ENCODE measurements at regions of chr12 and their contacts with region 1.

Region 1: GRCh38 chr12:52903285-52903854 is 1.5 kb downstream of the KRT8 start:
- DNase-seq: no peak
- H3K4me3 ChIP-seq: peak overlapping the region; percentile 97
- H3K27ac ChIP-seq: peak overlapping the region; percentile 93
- H3K4me1 ChIP-seq: peaks cover 69% of the 10 kb centered on the region
- H3K27me3 ChIP-seq: no peaks in the 10 kb centered on the region
- CTCF ChIP-seq: no peak

Region 2: DNA sequence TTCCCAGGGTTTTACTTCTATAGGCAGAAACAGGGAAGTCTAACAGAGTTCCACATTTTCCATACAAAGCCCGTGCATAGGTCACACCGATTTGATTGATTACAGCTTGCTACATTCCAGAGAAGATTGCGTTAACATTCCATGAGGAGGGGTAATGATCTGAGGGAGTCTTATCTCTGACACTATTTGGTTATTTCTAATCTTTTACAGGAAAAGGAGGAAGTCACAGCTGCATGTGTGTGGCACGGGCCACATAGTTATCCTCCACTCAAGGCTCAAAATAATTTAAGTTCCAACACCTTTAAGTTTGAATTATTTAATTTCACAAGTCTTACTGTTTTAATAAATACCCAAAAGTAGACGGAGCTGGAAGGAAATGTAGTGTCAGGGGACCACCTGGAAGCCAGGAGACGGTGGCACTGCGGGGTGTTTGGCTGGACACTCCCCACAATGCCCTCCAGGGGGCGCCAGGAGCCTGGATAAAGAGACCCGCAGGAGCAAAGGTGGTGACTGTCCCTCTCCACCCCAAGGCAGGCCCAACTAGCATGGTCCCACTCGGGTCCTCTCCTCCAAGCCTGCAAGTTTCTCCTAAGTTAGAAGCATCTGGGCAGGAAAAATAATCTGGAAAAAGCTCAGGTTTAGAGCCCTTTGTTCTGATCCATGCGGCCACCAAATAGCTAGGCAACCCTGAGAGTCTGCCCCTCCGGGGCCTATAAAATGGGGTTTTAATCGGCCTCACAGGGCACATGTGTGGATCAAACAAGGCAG is 18.7 kb before region 1 on chr12:
- CTCF ChIA-PET with region 1: interaction called, 5 read pairs
- POLR2A ChIA-PET with region 1: interaction called, 9 read pairs
- intact Hi-C with region 1: loop called (anchors 1 kb)
- DNase-seq: peak in 1 of 2 experiments; percentile 76
- H3K4me3 ChIP-seq: no peak overlapping the region
- H3K27ac ChIP-seq: no peak overlapping the region
- H3K4me1 ChIP-seq: peaks cover 6% of the 10 kb centered on the region
- H3K27me3 ChIP-seq: no peaks in the 10 kb centered on the region
- CTCF ChIP-seq: peak; percentile 97

Region 3: DNA sequence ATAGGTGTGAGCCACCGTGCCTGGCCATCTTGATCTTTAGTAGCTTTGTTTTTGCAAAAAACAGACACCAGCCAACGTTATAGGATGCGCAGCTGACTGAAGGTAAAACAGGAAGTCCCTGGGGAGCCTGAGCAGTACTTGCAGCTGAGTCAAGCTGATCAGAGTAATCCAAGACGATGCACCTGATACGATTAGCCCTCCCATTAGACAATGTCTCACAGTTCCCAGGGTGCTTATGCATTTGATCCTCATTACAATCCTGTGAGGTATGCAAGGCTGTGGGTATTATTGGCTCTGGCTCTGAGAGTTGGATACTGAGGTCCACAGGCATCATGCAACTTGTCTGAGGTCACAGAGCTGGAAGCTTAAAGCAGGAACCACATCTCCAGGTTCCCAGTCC is 53.6 kb after region 1 on chr12:
- CTCF ChIA-PET with region 1: interaction called, 9 read pairs
- POLR2A ChIA-PET with region 1: interaction called, 24 read pairs
- intact Hi-C with region 1: no loop called
- DNase-seq: peak in 1 of 2 experiments; percentile 94
- H3K4me3 ChIP-seq: no peak overlapping the region
- H3K27ac ChIP-seq: peak overlapping the region; percentile 65
- H3K4me1 ChIP-seq: peaks cover 24% of the 10 kb centered on the region
- H3K27me3 ChIP-seq: no peaks in the 10 kb centered on the region
- CTCF ChIP-seq: no peak

Region 4: GRCh38 chr12:52969828-52970569 is 66.6 kb after region 1 on chr12:
- CTCF ChIA-PET with region 1: interaction called, 20 read pairs
- POLR2A ChIA-PET with region 1: interaction called, 62 read pairs
- intact Hi-C with region 1: loop called (anchors 1 kb)
- DNase-seq: peak; percentile 90 to 98
- H3K4me3 ChIP-seq: peak overlapping the region; percentile 28; the same call in 1 of the 2 replicates
- H3K27ac ChIP-seq: peak overlapping the region; percentile 99
- H3K4me1 ChIP-seq: peaks cover 67% of the 10 kb centered on the region
- H3K27me3 ChIP-seq: no peaks in the 10 kb centered on the region
- CTCF ChIP-seq: no peak